ENCODE measurements at regions of chr19 and their contacts with region 1.

Region 1: DNA sequence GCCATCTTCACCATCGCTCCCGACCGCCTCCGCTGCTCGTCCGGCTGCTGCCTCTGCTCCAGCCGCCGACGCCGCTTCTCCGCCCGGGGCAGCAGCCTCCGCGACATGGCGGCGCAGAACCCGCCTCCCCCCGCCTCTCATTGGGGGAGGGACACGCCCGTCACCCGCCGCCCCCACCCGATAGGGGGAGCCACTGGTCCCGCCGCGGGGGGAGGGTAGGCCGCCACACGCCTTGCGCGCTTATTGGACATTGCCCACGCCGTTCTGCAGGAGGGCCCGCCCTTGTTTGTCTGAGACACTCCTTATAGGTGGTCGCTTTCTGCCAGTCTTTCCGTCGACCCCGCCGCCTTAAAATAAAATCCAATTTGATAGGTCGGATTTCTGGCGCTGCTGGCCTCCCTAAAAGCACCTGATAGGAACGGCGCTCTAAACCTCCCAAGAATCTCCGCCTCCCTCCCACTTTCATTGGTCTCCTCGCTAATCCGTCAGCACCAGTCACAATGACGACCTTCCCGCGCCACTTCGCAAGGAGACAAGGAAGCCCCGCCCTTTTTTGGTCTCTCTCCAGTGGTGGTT is at the start of gene HNRNPL:
- H3K4me3 Mint-ChIP-seq: peak within 1 kb of the TSS; percentile 88
- H3K27ac Mint-ChIP-seq: peak within 1 kb of the TSS; percentile 99
- H3K4me1 Mint-ChIP-seq: peaks cover 39% of the 10 kb centered on the region
- H3K27me3 Mint-ChIP-seq: no peaks in the 10 kb centered on the region

Region 2: GRCh38 chr19:38729653-38730469 is 120.1 kb before region 1 on chr19:
- intact Hi-C with region 1: loop called (anchors 10 kb)
- H3K4me3 Mint-ChIP-seq: no peak overlapping the region
- H3K27ac Mint-ChIP-seq: no peak overlapping the region
- H3K4me1 Mint-ChIP-seq: peaks cover 36% of the 10 kb centered on the region
- H3K27me3 Mint-ChIP-seq: no peaks in the 10 kb centered on the region

Region 3: GRCh38 chr19:38831142-38831605 is 18.8 kb before region 1 on chr19:
- intact Hi-C with region 1: loop called (anchors 1 kb)
- H3K4me3 Mint-ChIP-seq: peak overlapping the region; percentile 93
- H3K27ac Mint-ChIP-seq: peak overlapping the region; percentile 94
- H3K4me1 Mint-ChIP-seq: peaks cover 51% of the 10 kb centered on the region
- H3K27me3 Mint-ChIP-seq: no peaks in the 10 kb centered on the region

Region 4: GRCh38 chr19:38869856-38870607 is 20.1 kb after region 1 on chr19:
- intact Hi-C with region 1: loop called (anchors 1 kb)
- H3K4me3 Mint-ChIP-seq: peak overlapping the region; percentile 88
- H3K27ac Mint-ChIP-seq: peak overlapping the region; percentile 78
- H3K4me1 Mint-ChIP-seq: peaks cover 35% of the 10 kb centered on the region
- H3K27me3 Mint-ChIP-seq: peaks cover 1% of the 10 kb centered on the region

Region 5: DNA sequence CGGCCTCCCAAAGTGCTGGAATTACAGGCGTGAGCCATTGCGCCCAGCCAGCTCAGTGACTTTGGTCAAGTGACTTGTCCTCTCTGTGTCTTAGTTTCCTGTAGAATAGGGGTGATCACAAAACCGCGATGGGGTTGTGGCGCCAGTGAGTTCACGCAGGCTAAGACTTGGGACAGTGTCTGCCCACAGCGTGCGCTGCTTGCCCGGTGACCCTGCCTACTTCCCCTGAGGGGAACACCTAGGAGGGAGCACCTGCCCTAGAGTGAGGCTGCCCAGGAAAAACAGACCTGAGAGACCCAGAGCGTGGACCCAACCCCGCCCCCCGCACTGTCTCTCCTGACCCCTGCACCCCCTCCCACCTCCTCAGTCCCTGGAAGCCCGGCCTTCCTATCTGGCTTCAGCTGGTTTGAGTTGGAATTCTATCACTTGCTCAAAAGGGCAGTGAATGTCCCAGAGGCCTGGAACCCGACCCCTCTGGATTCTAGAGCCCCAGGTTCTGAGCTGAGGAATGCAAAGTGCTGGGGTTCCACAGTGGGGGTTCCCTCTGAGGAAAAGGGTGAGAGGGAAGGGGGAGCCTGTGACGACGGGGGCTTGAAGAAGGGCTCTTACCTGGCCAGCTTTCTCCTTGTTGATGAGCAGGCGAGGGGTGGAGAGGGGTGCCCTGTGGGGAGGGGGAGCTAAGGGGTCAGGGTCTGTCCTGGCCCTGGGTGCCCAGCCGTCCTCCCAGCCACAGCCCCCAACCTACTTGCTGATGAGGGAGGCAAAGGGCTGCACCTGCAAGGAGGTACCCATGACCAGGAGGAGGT is 30.3 kb after region 1 on chr19:
- intact Hi-C with region 1: no loop called
- H3K4me3 Mint-ChIP-seq: no peak overlapping the region
- H3K27ac Mint-ChIP-seq: no peak overlapping the region
- H3K4me1 Mint-ChIP-seq: peaks cover 19% of the 10 kb centered on the region
- H3K27me3 Mint-ChIP-seq: no peaks in the 10 kb centered on the region

Region 6: DNA sequence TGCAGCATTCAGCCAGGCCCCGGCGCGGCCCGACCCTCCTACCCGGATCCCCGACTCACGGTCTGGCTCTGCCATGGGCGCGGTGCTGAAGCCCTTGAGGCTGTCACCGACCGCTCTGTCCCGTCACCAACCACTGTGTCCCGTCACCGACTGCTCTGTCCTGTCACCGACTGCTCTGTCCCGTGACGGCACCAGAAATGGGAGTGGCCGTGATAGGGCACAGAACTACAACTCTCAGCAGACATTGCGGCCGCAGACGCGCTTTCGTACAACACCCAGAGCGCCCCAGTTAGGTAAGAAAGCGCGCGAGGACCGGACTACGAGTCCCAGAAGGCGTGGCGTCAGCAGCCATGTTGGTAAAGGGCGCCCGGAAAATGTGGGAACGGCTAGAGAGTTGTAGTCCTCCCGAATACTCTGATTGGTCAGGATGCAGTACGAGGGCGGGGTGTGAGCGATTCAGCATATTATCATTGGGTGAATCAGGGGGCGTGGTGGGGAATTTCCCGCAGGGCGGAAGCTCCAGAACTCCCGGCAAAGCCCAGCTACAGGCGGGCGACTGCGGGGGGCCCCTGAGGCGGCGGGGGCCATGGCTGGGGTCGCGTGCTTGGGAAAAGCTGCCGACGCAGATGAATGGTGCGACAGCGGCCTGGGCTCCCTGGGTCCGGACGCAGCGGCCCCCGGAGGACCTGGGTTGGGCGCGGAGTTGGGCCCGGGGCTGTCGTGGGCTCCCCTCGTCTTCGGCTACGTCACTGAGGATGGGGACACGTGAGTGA is 49.7 kb after region 1 on chr19 and contains the starts of genes NFKBIB and SIRT2:
- intact Hi-C with region 1: loop called (anchors 1 kb)
- H3K4me3 Mint-ChIP-seq: peak within 1 kb of the TSS; percentile 90
- H3K27ac Mint-ChIP-seq: peak within 1 kb of the TSS; percentile 89
- H3K4me1 Mint-ChIP-seq: peaks cover 43% of the 10 kb centered on the region
- H3K27me3 Mint-ChIP-seq: no peaks in the 10 kb centered on the region

Region 7: GRCh38 chr19:38989066-38989605 is 139.2 kb after region 1 on chr19:
- intact Hi-C with region 1: no loop called
- H3K4me3 Mint-ChIP-seq: no peak overlapping the region
- H3K27ac Mint-ChIP-seq: no peak overlapping the region
- H3K4me1 Mint-ChIP-seq: peaks cover 10% of the 10 kb centered on the region
- H3K27me3 Mint-ChIP-seq: peaks cover 16% of the 10 kb centered on the region

Region 8: GRCh38 chr19:39038098-39038497 is 188.2 kb after region 1 on chr19:
- intact Hi-C with region 1: no loop called
- H3K4me3 Mint-ChIP-seq: no peak overlapping the region
- H3K27ac Mint-ChIP-seq: no peak overlapping the region
- H3K4me1 Mint-ChIP-seq: peaks cover 5% of the 10 kb centered on the region
- H3K27me3 Mint-ChIP-seq: peaks cover 31% of the 10 kb centered on the region

Region 9: DNA sequence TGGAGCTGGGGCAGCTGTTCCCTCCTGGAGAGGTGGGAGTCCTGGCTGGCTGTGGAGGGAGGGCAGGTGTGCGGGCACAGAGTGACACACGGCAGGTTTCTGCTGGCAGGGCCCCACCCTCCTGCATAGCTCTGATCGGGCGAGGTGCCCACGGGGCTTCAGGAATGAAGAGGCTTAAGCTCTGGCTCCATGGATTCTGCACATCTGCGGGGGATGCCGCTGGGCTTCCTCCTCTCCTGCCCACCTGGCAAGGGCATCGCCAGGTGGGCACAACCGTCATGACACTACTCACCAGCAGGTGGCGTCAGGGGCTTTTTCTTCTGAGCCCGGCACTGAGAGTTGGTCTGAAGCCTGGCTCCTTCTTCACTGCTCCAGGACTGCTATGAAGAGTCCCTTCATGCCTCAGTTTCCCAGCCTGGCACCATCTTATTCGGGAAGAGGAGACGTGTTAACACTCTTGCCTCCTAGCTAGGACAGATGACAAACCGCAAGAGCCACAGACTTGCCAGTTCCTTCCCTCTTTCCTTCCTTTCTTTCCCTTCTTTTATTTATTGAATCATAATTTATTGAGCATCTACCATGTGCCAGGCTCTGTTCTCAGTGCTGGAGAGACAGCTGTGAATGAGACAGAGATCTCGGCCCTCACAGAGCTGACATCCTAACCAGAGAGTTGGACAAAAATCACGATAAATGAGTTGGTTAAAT is 260.5 kb after region 1 on chr19:
- intact Hi-C with region 1: no loop called
- H3K4me3 Mint-ChIP-seq: no peak overlapping the region
- H3K27ac Mint-ChIP-seq: no peak overlapping the region
- H3K4me1 Mint-ChIP-seq: peaks cover 5% of the 10 kb centered on the region
- H3K27me3 Mint-ChIP-seq: peaks cover 14% of the 10 kb centered on the region